ENCODE measurements at regions of chr16 and their contacts with region 1.

Region 1: GRCh38 chr16:53054670-53055485 is at the start of gene CHD9:
- DNase-seq: peak; percentile 80
- H3K4me3 Mint-ChIP-seq: peak within 1 kb of the TSS; percentile 78
- H3K27ac Mint-ChIP-seq: peak within 1 kb of the TSS; percentile 44
- H3K4me1 Mint-ChIP-seq: peaks cover 17% of the 10 kb centered on the region
- H3K27me3 Mint-ChIP-seq: no peaks in the 10 kb centered on the region
- total RNA-seq, gene CHD9: 15.0 to 15.5 TPM

Region 2: GRCh38 chr16:52976539-52977167 is 78.2 kb before region 1 on chr16:
- CTCF ChIA-PET with region 1: no interaction called
- POLR2A ChIA-PET with region 1: no interaction called
- intact Hi-C with region 1: no loop called
- DNase-seq: no peak
- H3K4me3 Mint-ChIP-seq: no peak overlapping the region
- H3K27ac Mint-ChIP-seq: no peak overlapping the region
- H3K4me1 Mint-ChIP-seq: no peaks in the 10 kb centered on the region
- H3K27me3 Mint-ChIP-seq: peaks cover 19% of the 10 kb centered on the region

Region 3: DNA sequence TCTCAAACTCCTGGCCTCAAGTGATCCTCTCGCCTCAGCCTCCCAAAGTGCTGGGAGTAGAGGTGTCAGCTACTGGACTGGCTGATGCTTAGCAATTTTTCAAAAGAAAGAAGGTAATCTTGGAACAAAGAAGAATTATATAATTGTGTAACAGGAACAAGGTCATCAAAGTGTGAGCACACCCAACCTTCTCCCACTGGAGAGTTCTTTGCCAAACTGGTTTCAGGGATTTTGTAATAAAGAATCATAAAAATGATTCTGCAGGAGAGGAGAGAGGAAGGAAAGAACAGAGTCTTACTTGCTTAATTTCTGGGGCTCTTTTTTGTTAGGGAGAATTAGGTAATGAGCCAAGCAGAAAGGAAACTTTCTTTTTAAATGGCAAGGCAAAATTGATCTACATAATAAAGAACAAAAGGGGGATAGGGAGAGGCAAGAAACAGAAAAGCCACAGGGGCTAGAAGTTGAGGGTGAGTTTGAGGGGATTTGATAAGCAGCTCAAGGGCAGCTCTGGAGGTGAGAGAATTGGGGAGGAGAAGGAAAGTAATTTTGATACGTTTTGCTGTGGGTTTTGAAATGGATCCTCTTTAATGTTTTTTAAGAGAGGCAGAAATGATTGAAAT is 23.4 kb before region 1 on chr16:
- CTCF ChIA-PET with region 1: no interaction called
- POLR2A ChIA-PET with region 1: no interaction called
- intact Hi-C with region 1: no loop called
- DNase-seq: no peak
- H3K4me3 Mint-ChIP-seq: no peak overlapping the region
- H3K27ac Mint-ChIP-seq: no peak overlapping the region
- H3K4me1 Mint-ChIP-seq: no peaks in the 10 kb centered on the region
- H3K27me3 Mint-ChIP-seq: peaks cover 24% of the 10 kb centered on the region

Region 4: GRCh38 chr16:53068423-53068833 is 13.6 kb after region 1 on chr16:
- CTCF ChIA-PET with region 1: interaction called, 12 read pairs
- POLR2A ChIA-PET with region 1: no interaction called
- intact Hi-C with region 1: no loop called
- DNase-seq: no peak
- H3K4me3 Mint-ChIP-seq: no peak overlapping the region
- H3K27ac Mint-ChIP-seq: no peak overlapping the region
- H3K4me1 Mint-ChIP-seq: peaks cover 26% of the 10 kb centered on the region
- H3K27me3 Mint-ChIP-seq: no peaks in the 10 kb centered on the region

Region 5: DNA sequence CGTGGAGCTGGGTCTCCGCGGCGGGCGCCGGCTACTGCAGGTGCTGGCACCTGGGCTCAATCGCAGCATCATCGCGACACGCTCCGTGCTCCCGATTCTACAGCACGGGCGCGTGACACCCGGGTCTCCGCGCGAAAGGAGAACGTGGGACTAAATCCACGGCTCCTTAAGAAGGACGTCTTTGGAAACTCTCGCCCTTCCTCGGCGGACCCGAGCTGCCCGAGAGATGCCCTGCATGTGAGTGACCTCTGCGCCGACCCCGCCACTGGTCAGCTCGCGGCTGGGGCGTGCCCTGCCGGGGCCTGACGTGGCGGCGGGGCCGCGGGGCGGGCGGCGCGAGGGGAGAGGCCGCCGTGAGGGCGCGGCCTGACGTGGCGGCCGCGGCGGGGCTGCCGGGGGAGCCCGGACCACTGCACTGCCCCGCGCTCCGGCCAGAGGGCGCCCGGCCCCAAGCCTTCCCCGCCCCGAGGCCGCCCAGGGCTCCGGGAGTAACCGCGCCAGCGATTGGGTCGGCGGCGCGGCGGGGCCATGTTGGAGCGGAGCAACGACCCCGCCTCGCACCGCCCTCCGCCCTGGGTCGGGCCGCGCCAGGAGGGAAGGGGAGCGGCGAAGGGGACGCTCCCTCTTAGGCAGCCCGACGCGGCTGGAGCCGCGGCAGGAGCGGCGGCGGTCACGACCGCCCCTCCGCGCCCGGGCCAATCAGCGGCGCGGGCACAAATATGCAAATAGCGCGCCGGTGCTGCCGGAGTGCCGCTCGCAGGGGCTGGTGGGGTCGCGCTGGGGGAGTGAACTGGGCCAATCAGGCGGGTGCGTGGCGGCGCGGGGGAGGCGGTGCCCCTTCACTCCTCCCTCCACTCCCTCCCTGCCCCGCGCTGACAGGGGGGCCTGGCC is 75.5 kb after region 1 on chr16:
- CTCF ChIA-PET with region 1: interaction called, 12 read pairs
- POLR2A ChIA-PET with region 1: no interaction called
- intact Hi-C with region 1: loop called (anchors 1 kb)
- DNase-seq: peak; percentile 92
- H3K4me3 Mint-ChIP-seq: peak overlapping the region; percentile 74
- H3K27ac Mint-ChIP-seq: no peak overlapping the region
- H3K4me1 Mint-ChIP-seq: peaks cover 7% of the 10 kb centered on the region
- H3K27me3 Mint-ChIP-seq: no peaks in the 10 kb centered on the region

Region 6: DNA sequence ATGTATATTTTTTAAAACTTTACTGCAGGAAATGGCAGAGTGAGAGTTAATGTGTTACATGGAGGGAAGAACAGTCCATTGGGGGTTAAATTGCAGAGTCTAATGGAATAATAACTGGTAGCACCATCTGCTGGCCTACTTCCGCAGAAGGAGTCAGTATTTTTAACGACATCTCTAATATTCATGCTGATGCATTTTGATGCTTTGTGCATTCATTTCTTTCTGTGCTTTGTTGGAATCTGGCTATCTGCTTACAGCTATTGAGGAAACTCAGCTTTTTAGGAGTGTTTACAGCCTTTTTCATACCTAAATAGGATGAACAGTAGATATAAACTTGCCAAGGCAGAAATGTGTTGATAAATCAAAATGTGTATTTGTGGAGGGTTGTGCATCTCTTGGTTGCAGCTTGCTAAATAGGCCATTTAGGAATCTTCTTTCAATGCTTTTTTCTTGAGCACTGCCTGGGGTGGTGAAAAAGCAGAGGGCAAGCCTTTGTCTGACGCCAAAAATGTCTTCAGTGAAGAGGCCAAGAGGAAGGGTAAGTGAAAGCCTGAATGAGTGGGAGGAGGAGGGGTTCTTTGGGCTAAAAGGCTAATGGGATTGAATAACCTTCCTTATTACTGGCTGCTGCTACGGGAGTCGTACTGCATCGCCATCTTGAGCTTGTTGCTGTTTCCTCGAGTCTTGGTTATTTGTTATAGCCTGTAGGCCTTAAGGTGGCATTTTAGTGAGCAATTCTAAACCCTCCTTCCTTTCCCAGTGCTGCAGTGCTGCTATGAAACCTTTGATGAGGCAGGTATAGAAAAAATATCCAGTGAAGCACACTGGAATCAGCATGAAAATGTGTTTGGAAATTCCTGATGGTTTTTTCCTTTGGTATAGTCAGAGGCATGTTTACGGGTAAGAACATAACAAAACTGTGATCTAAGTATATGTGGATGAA is 153.2 kb after region 1 on chr16:
- CTCF ChIA-PET with region 1: interaction called, 9 read pairs
- POLR2A ChIA-PET with region 1: no interaction called
- intact Hi-C with region 1: loop called (anchors 5 kb)
- DNase-seq: no peak
- H3K4me3 Mint-ChIP-seq: peak overlapping the region; percentile 17
- H3K27ac Mint-ChIP-seq: peak overlapping the region; percentile 28
- H3K4me1 Mint-ChIP-seq: peaks cover 14% of the 10 kb centered on the region
- H3K27me3 Mint-ChIP-seq: no peaks in the 10 kb centered on the region

Region 7: DNA sequence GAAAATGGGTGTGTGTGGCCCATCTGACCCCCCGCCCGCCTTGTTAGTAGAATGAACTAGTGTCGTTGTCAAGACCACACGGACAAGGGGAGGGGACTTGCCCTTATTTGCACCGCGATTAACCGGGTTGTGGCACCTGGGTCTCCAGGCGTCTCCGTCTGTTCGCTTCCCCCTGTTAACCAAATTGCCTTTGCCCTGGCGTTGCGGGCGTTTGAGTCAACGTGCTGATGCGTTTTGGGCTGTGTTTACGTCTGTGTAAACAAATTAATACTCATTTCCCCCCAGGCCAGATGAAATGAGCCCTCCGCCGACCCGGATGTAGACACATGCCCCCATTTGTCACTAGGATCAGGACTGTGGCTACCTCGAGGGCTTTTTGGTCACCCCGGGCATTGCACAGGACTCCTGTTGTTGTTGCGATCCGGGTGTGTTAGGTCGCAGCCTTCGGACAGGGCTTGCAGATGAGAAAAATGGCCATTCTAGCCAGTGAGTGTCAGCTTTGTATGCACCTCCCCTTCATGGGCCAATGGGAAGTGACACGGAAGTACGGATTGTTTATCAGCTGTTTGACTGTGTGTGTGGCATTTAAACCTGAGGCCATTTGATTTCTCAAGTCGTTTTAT is 380.3 kb after region 1 on chr16:
- CTCF ChIA-PET with region 1: interaction called, 3 read pairs
- POLR2A ChIA-PET with region 1: no interaction called
- intact Hi-C with region 1: loop called (anchors 10 kb)
- DNase-seq: peak; percentile 70
- H3K4me3 Mint-ChIP-seq: peak overlapping the region; percentile 90
- H3K27ac Mint-ChIP-seq: peak overlapping the region; percentile 92
- H3K4me1 Mint-ChIP-seq: peaks cover 44% of the 10 kb centered on the region
- H3K27me3 Mint-ChIP-seq: no peaks in the 10 kb centered on the region